ENCODE measurements at regions of chr2 and their contacts with region 1.

Region 1: DNA sequence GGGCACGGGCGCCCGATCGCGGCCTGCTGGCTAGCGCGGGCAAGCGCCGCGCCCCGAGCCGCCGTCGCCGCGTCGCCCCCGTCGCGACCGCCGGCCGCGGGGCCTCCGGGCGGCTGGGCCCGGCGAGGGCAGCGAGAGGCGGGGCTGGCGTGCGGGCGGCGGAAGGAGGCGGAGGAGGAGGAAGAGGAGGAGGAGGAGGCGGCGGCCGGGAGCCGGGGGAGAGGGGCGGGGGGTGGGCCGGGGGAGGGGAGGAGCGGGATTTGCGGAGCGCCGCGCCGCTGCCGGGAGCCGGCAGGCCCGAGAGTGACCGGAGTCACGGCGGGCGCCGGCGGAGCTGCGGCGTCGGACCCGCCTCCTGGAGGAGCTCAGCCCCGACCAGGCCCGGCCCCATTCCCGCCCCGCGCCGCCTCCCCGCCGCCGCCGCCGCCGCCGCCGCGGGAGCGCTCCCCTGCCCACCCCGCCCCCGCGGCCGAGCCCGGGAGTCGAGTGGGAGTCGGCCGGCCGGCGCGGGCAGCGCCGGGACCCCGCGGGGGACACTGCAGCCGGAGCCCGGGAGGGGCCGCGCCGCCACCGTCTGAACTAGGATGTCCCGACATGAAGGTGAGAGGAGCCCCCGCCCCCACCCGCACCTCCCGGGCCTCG is at the start of gene KCMF1:
- DNase-seq: peak; percentile 61 to 78 (median 66)
- H3K4me3 ChIP-seq: peak within 1 kb of the TSS; percentile 82
- H3K4me3 Mint-ChIP-seq: peak within 1 kb of the TSS; percentile 92 to 100 (median 95)
- H3K27ac ChIP-seq: peak within 1 kb of the TSS; percentile 88
- H3K27ac Mint-ChIP-seq: peak within 1 kb of the TSS; percentile 97 to 100 (median 98)
- H3K4me1 ChIP-seq: peaks cover 53% of the 10 kb centered on the region
- H3K4me1 Mint-ChIP-seq: peaks cover 49 to 67% (median 64%) of the 10 kb centered on the region in 3 donors
- H3K27me3 ChIP-seq: no peaks in the 10 kb centered on the region
- H3K27me3 Mint-ChIP-seq: peaks cover 0 to 4% of the 10 kb centered on the region in 2 donors
- total RNA-seq, gene KCMF1: 98.1 to 105 TPM

Region 2: GRCh38 chr2:84017010-84017409 is 954.0 kb before region 1 on chr2:
- CTCF ChIA-PET with region 1: no interaction called
- POLR2A ChIA-PET with region 1: no interaction called
- DNase-seq: no peak
- H3K4me3 ChIP-seq: no peak overlapping the region
- H3K4me3 Mint-ChIP-seq: no peak overlapping the region
- H3K27ac ChIP-seq: no peak overlapping the region
- H3K27ac Mint-ChIP-seq: no peak overlapping the region
- H3K4me1 ChIP-seq: no peaks in the 10 kb centered on the region
- H3K4me1 Mint-ChIP-seq: no peaks in the 10 kb centered on the region
- H3K27me3 ChIP-seq: no peaks in the 10 kb centered on the region
- H3K27me3 Mint-ChIP-seq: peaks cover 3 to 6% of the 10 kb centered on the region in 2 donors

Region 3: GRCh38 chr2:84713441-84713840 is 257.5 kb before region 1 on chr2:
- CTCF ChIA-PET with region 1: no interaction called
- POLR2A ChIA-PET with region 1: no interaction called
- DNase-seq: no peak
- H3K4me3 ChIP-seq: no peak overlapping the region
- H3K4me3 Mint-ChIP-seq: no peak overlapping the region
- H3K27ac ChIP-seq: no peak overlapping the region
- H3K27ac Mint-ChIP-seq: no peak overlapping the region
- H3K4me1 ChIP-seq: peaks cover 15% of the 10 kb centered on the region
- H3K4me1 Mint-ChIP-seq: peaks cover 9 to 16% (median 10%) of the 10 kb centered on the region in 3 donors
- H3K27me3 ChIP-seq: no peaks in the 10 kb centered on the region
- H3K27me3 Mint-ChIP-seq: no peaks in the 10 kb centered on the region

Region 4: GRCh38 chr2:84865181-84865783 is 105.7 kb before region 1 on chr2:
- CTCF ChIA-PET with region 1: no interaction called
- POLR2A ChIA-PET with region 1: no interaction called
- DNase-seq: peak in 2 of 5 donors; percentile 50 to 58
- H3K4me3 ChIP-seq: no peak overlapping the region
- H3K4me3 Mint-ChIP-seq: peak overlapping the region in 2 of 7 donors; percentile 8 to 66
- H3K27ac ChIP-seq: no peak overlapping the region
- H3K27ac Mint-ChIP-seq: peak overlapping the region; percentile 41 to 88 (median 70)
- H3K4me1 ChIP-seq: peaks cover 72% of the 10 kb centered on the region
- H3K4me1 Mint-ChIP-seq: peaks cover 54 to 82% (median 63%) of the 10 kb centered on the region in 3 donors
- H3K27me3 ChIP-seq: no peaks in the 10 kb centered on the region
- H3K27me3 Mint-ChIP-seq: no peaks in the 10 kb centered on the region

Region 5: GRCh38 chr2:84939426-84940087 is 31.4 kb before region 1 on chr2:
- CTCF ChIA-PET with region 1: interaction called, 5 read pairs
- POLR2A ChIA-PET with region 1: interaction called, 46 read pairs
- DNase-seq: peak; percentile 57 to 82 (median 70)
- H3K4me3 ChIP-seq: peak overlapping the region; percentile 54
- H3K4me3 Mint-ChIP-seq: peak overlapping the region; percentile 39 to 91 (median 81)
- H3K27ac ChIP-seq: peak overlapping the region; percentile 47
- H3K27ac Mint-ChIP-seq: peak overlapping the region; percentile 92 to 100 (median 97)
- H3K4me1 ChIP-seq: peaks cover 21% of the 10 kb centered on the region
- H3K4me1 Mint-ChIP-seq: peaks cover 21 to 36% (median 36%) of the 10 kb centered on the region in 3 donors
- H3K27me3 ChIP-seq: no peaks in the 10 kb centered on the region
- H3K27me3 Mint-ChIP-seq: no peaks in the 10 kb centered on the region

Region 6: DNA sequence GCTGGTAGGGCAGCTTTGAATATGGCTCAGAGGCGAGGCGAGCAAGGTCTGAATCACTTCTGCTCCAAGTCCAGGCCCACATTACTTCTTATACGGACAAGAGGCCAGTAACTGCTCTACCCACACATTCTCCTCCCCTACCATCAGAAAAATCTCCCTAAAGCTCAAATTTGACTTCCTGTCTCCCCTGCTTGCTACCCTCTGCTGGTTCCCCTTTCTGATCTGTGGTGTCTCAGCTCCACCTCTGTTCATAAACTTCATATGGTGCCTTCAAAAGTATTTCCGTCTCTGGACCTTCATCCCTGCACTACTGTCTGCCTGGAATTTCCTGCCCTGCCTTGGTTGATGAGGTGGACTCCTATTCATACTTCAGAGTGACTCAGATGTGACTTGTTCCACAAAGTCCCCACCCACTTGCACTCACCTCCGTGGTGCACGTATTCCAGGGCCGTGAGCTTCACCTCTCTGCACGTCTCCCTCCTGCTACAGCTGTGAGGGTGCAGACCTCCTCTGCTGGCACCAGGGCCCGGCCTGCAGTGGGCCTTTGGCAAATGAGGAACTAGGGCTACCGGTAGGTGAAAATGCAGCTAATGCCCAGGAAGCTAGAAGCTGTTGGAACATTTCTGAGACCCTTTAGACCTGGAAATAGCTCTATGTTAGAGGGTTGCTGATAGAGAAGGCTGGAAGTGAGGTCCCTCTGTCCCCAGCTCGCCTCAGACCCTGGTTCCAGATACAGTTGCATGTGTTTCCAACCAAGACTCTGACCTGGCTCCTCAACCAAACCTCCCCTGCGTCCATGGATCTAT is 24.6 kb before region 1 on chr2:
- CTCF ChIA-PET with region 1: interaction called, 11 read pairs
- POLR2A ChIA-PET with region 1: interaction called, 46 read pairs
- DNase-seq: peak in 4 of 5 donors; percentile 20 to 66 (median 47)
- H3K4me3 ChIP-seq: peak overlapping the region; percentile 56
- H3K4me3 Mint-ChIP-seq: peak overlapping the region; percentile 35 to 87 (median 66)
- H3K27ac ChIP-seq: no peak overlapping the region
- H3K27ac Mint-ChIP-seq: peak overlapping the region; percentile 81 to 99 (median 84)
- H3K4me1 ChIP-seq: peaks cover 23% of the 10 kb centered on the region
- H3K4me1 Mint-ChIP-seq: peaks cover 21 to 27% (median 24%) of the 10 kb centered on the region in 3 donors
- H3K27me3 ChIP-seq: no peaks in the 10 kb centered on the region
- H3K27me3 Mint-ChIP-seq: no peaks in the 10 kb centered on the region